ENCODE measurements at regions of chr1 and their contacts with region 1.

Region 1: GRCh38 chr1:175154629-175155472 is 37.7 kb downstream of the KIAA0040 start:
- DNase-seq: peak; percentile 51 to 80 (median 57)
- H3K4me3 ChIP-seq: no peak overlapping the region
- H3K4me3 Mint-ChIP-seq: no peak overlapping the region
- H3K27ac ChIP-seq: no peak overlapping the region
- H3K27ac Mint-ChIP-seq: peak overlapping the region in 1 of 8 donors; percentile 60
- H3K4me1 ChIP-seq: peaks cover 10% of the 10 kb centered on the region
- H3K4me1 Mint-ChIP-seq: peaks cover 15 to 18% (median 17%) of the 10 kb centered on the region in 3 donors
- H3K27me3 ChIP-seq: peaks cover 4% of the 10 kb centered on the region
- H3K27me3 Mint-ChIP-seq: peaks cover 26 to 30% of the 10 kb centered on the region in 2 donors

Region 2: DNA sequence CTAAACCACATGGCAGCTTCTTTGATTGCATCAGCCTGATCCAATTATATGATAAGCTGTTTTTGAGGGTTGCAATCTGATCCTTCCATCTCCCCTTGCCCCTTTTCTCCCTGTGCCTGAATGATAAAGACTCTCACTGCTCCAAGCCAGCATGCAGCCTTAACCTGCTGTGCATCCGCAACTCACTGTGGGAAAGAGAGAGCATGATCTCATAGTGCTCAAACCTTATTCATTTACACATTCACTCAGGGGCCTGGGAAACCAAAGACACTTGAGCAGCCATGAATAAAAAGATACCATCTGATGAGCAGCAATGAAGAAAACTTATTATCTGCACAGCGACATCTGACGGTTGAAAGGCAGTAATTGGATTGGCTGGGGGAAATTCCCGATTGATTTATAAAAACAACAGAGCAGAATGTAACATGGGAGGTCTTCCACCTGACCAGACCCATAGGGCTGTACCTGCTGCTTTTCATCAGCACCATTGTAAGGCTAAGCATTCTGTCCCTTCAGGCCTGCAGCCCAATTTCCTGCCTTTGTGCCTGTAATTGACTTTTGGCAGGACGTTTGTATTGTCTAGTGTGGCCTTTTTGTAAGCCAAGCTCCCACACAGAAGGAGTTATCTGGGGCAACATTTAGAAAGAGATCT is 24.7 kb before region 1 on chr1:
- CTCF ChIA-PET with region 1: interaction called, 12 read pairs
- POLR2A ChIA-PET with region 1: no interaction called
- DNase-seq: no peak
- H3K4me3 ChIP-seq: no peak overlapping the region
- H3K4me3 Mint-ChIP-seq: no peak overlapping the region
- H3K27ac ChIP-seq: no peak overlapping the region
- H3K27ac Mint-ChIP-seq: no peak overlapping the region
- H3K4me1 ChIP-seq: no peaks in the 10 kb centered on the region
- H3K4me1 Mint-ChIP-seq: no peaks in the 10 kb centered on the region
- H3K27me3 ChIP-seq: no peaks in the 10 kb centered on the region
- H3K27me3 Mint-ChIP-seq: peaks cover 6 to 15% of the 10 kb centered on the region in 2 donors

Region 3: DNA sequence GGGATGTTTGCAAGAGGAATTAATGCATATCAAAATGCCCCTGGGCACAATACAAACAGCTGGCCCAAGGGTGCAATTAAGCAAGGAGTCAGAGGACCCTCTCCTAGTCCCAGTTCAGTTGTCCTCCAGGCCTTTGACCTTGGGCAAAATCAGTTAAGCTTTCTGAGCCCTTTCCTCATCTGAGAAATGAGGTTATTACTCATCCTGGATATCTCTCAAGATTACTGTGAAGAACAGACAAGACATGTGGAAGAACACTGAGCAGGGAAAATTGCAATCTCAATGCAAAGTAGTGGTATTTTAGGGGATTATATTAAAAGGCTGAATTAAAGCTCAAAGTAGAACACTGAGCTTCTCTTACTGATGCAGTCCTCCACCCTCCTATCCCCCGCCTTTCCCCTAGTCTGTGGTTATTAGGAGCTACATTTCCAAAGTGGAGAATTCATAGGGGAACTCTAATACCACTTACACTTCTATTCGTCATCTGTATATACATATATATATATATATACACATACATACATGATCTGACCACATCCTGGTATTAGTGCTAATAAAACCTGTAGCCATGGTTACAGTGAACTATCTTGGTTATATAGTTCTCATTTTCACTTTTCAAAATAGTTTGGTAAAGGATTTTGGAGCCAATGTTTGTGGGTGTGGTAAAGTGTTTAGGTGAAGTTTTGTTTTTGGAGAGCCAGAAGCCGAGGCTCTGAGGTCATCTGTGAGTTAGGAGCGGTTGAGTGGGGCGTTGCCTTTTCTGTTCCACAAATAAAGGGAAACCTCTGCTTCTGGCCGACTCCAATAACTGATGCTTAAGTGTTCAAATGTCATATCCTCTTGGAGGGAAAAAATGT is 19.7 kb after region 1 on chr1:
- CTCF ChIA-PET with region 1: interaction called, 11 read pairs
- POLR2A ChIA-PET with region 1: no interaction called
- DNase-seq: peak in 1 of 5 donors; percentile 31
- H3K4me3 ChIP-seq: no peak overlapping the region
- H3K4me3 Mint-ChIP-seq: peak overlapping the region in 5 of 7 donors; percentile 9 to 54 (median 30)
- H3K27ac ChIP-seq: no peak overlapping the region
- H3K27ac Mint-ChIP-seq: peak overlapping the region in 7 of 8 donors; percentile 48 to 85 (median 66)
- H3K4me1 ChIP-seq: peaks cover 19% of the 10 kb centered on the region
- H3K4me1 Mint-ChIP-seq: peaks cover 65 to 92% (median 87%) of the 10 kb centered on the region in 3 donors
- H3K27me3 ChIP-seq: no peaks in the 10 kb centered on the region
- H3K27me3 Mint-ChIP-seq: no peaks in the 10 kb centered on the region

Region 4: GRCh38 chr1:175192630-175193526 is 38.0 kb after region 1 on chr1 and contains the start of gene KIAA0040:
- CTCF ChIA-PET with region 1: interaction called, 18 read pairs
- POLR2A ChIA-PET with region 1: no interaction called
- DNase-seq: peak; percentile 50 to 68 (median 53)
- H3K4me3 ChIP-seq: peak within 1 kb of the TSS; percentile 95
- H3K4me3 Mint-ChIP-seq: peak within 1 kb of the TSS; percentile 94 to 99 (median 98)
- H3K27ac ChIP-seq: peak within 1 kb of the TSS; percentile 80
- H3K27ac Mint-ChIP-seq: peak within 1 kb of the TSS; percentile 71 to 99 (median 94)
- H3K4me1 ChIP-seq: peaks cover 39% of the 10 kb centered on the region
- H3K4me1 Mint-ChIP-seq: peaks cover 47 to 53% (median 50%) of the 10 kb centered on the region in 3 donors
- H3K27me3 ChIP-seq: no peaks in the 10 kb centered on the region
- H3K27me3 Mint-ChIP-seq: no peaks in the 10 kb centered on the region
- total RNA-seq, gene KIAA0040: 30.4 to 31.8 TPM

Region 5: DNA sequence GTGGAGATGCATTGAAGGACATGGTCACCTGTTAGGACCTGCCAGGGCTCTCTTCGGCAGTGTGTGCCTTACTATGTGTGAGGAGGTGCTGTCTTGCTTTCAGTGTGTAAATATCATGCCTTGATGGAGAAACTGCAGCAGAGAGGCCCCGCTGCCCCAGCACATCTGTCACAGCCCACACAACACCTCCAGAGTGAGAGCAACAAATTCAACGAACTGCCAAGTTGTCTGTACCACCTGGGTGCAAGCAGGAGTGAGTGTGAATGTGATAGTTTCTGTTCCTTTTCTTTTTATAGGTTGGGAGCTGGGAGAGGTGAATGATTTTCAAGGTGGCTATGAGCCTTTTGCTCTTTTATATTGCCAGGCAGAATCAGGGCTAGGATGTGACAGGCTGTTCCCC is 152.3 kb after region 1 on chr1:
- CTCF ChIA-PET with region 1: interaction called, 214 read pairs
- POLR2A ChIA-PET with region 1: no interaction called
- DNase-seq: no peak
- H3K4me3 ChIP-seq: no peak overlapping the region
- H3K4me3 Mint-ChIP-seq: no peak overlapping the region
- H3K27ac ChIP-seq: no peak overlapping the region
- H3K27ac Mint-ChIP-seq: no peak overlapping the region
- H3K4me1 ChIP-seq: no peaks in the 10 kb centered on the region
- H3K4me1 Mint-ChIP-seq: no peaks in the 10 kb centered on the region
- H3K27me3 ChIP-seq: no peaks in the 10 kb centered on the region
- H3K27me3 Mint-ChIP-seq: peaks cover 0 to 2% of the 10 kb centered on the region in 2 donors

Region 6: GRCh38 chr1:175338387-175339135 is 183.7 kb after region 1 on chr1:
- CTCF ChIA-PET with region 1: interaction called, 18 read pairs
- POLR2A ChIA-PET with region 1: no interaction called
- DNase-seq: peak; percentile 23 to 67 (median 37)
- H3K4me3 ChIP-seq: no peak overlapping the region
- H3K4me3 Mint-ChIP-seq: no peak overlapping the region
- H3K27ac ChIP-seq: no peak overlapping the region
- H3K27ac Mint-ChIP-seq: no peak overlapping the region
- H3K4me1 ChIP-seq: no peaks in the 10 kb centered on the region
- H3K4me1 Mint-ChIP-seq: peaks cover 0 to 4% (median 2%) of the 10 kb centered on the region in 3 donors
- H3K27me3 ChIP-seq: peaks cover 5% of the 10 kb centered on the region
- H3K27me3 Mint-ChIP-seq: peaks cover 5 to 37% of the 10 kb centered on the region in 2 donors

Measured in CD8-positive, alpha-beta memory T cell (primary cell).